ENCODE measurements at regions of chr7 and their contacts with region 1.

Region 1: GRCh38 chr7:140726281-140726680 is 29.8 kb downstream of the NDUFB2 start:
- DNase-seq: no peak
- ATAC-seq: no peak
- H3K4me3 Mint-ChIP-seq: no peak overlapping the region
- H3K27ac Mint-ChIP-seq: peak overlapping the region; percentile 12; the same call in 1 of the 2 replicates
- H3K4me1 Mint-ChIP-seq: no peaks in the 10 kb centered on the region
- H3K27me3 Mint-ChIP-seq: no peaks in the 10 kb centered on the region
- CTCF ChIP-seq: no peak

Region 2: DNA sequence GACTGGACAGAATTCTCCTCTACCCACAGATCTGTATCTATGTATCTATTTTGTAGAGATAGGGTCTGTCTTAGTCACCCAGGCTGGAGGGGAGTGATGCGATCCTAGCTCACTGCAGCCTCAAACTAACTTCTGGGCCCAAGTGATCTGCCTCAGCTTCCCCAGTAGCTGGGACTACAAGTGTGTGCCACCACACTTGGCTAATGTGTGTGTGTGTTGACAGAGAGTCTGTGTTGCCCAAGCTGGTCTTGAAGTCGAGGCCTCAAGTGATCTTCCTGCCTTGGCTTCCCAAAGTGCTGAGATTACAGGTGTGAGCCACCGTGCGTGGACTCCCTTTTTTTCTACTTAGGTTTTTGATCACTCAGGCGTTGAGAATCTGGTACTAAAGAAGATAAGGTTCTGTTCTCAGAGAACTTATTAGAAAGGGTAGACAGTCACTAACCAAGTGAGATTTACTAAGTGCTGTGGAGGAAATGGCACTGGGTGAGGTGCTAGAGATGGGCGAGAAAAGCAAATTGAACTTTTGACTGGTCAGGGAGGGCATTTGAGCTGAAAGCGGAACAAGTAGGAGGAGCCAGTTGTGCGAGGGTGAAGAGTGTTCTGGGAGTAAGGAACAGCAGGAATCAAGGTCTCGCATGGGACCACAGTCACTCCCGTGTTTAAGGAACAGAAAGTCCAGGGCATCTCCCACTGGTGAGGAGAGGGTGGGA is 11.8 kb before region 1 on chr7:
- CTCF ChIA-PET with region 1: interaction called, 10 read pairs
- POLR2A ChIA-PET with region 1: no interaction called
- DNase-seq: no peak
- ATAC-seq: no peak
- H3K4me3 Mint-ChIP-seq: no peak overlapping the region
- H3K27ac Mint-ChIP-seq: no peak overlapping the region
- H3K4me1 Mint-ChIP-seq: no peaks in the 10 kb centered on the region
- H3K27me3 Mint-ChIP-seq: no peaks in the 10 kb centered on the region
- CTCF ChIP-seq: no peak

Region 3: GRCh38 chr7:140745266-140746058 is 19.2 kb after region 1 on chr7:
- CTCF ChIA-PET with region 1: interaction called, 11 read pairs
- POLR2A ChIA-PET with region 1: interaction called, 3 read pairs
- DNase-seq: no peak
- ATAC-seq: no peak
- H3K4me3 Mint-ChIP-seq: no peak overlapping the region
- H3K27ac Mint-ChIP-seq: no peak overlapping the region
- H3K4me1 Mint-ChIP-seq: peaks cover 10% of the 10 kb centered on the region
- H3K27me3 Mint-ChIP-seq: no peaks in the 10 kb centered on the region
- CTCF ChIP-seq: no peak

Measured in WTC11 (cell line).